ENCODE measurements at regions of chr1 and their contacts with region 1.

Region 1: DNA sequence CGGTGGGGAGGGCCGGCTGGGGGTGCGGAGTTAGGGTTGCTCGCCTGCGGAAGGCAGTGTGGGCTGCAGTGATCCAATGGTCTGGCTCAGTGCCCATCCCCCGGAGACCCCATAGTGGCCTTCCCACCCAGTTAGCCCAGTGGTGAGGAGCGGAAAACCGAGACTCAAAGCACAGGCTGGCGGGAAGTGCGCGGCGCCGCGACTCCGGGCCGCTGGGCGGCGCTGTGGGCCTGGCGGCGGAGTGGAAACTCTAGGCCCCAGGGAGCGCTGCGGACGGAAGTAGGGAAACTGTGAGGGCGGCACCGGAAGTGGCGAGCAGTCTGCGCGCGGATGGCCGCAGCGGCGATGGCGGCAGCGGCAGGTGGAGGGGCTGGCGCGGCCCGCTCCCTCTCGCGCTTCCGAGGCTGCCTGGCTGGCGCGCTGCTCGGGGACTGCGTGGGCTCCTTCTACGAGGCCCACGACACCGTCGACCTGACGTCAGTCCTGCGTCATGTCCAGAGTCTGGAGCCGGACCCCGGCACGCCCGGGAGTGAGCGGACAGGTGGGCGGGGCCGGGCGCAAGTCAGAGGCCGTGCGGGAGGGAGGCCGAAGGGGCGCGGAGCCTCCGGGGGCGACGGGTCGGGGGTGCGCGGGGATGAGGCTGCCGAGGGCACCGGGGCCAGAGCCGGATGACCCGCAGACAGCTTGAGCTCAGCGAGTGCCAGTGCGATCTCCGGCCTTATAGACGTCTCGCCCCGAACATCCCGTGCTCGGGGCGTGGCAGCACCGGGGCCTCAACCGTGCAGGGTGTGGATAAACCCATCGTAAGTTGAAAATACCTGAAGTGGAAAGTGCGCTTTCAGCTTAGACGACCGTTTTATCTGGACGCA is at the start of gene ADPRS:
- DNase-seq: peak; percentile 97
- H3K4me3 Mint-ChIP-seq: peak within 1 kb of the TSS; percentile 95
- H3K27ac Mint-ChIP-seq: peak within 1 kb of the TSS; percentile 89
- H3K4me1 Mint-ChIP-seq: peaks cover 21% of the 10 kb centered on the region
- H3K27me3 Mint-ChIP-seq: peaks cover 5% of the 10 kb centered on the region
- total RNA-seq, gene ADPRS: 35.3 and 38.8 TPM in 2 replicates

Region 2: DNA sequence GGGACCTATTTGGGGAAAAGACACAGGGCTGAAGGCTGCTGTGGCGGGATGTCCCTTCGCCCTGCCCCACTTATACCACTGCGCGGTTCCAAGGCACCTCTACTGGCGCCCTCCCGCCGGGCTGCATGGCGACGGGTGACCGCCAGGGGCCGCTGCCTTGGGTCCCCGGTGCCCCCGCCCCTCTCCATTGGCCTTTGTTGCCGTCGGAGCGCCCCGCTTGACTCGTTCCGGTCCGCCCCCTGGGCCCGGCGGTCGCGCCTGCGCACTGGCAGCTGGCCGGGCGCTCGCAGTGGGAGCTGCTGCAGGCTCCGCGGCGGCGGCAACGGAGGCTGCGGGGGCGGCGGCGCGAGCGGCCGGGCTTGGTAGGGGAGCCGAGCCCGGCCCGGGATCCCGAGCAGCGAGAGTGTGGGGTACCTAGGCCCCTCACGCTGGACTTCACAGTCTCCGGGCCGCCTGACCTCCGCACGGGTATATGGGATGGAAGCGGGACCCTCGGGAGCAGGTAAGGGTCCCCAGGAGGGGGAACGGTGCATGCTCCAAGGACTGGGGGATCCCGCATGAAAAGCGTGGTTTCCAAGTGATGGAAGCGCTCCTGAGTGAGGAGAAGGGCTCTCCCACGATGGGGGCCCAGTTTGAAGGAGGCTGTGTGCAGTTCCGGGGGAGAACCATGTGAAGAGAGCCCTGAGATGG is 205.7 kb before region 1 on chr1 and contains the start of gene AGO1:
- intact Hi-C with region 1: loop called (anchors 5 kb)
- DNase-seq: peak; percentile 100
- H3K4me3 Mint-ChIP-seq: peak within 1 kb of the TSS; percentile 95
- H3K27ac Mint-ChIP-seq: peak within 1 kb of the TSS; percentile 82
- H3K4me1 Mint-ChIP-seq: peaks cover 41% of the 10 kb centered on the region
- H3K27me3 Mint-ChIP-seq: peaks cover 5% of the 10 kb centered on the region
- total RNA-seq, gene AGO1: 38.6 and 39.1 TPM in 2 replicates

Region 3: GRCh38 chr1:36034692-36035091 is 54.1 kb before region 1 on chr1:
- intact Hi-C with region 1: no loop called
- DNase-seq: no peak
- H3K4me3 Mint-ChIP-seq: no peak overlapping the region
- H3K27ac Mint-ChIP-seq: no peak overlapping the region
- H3K4me1 Mint-ChIP-seq: no peaks in the 10 kb centered on the region
- H3K27me3 Mint-ChIP-seq: no peaks in the 10 kb centered on the region

Region 4: DNA sequence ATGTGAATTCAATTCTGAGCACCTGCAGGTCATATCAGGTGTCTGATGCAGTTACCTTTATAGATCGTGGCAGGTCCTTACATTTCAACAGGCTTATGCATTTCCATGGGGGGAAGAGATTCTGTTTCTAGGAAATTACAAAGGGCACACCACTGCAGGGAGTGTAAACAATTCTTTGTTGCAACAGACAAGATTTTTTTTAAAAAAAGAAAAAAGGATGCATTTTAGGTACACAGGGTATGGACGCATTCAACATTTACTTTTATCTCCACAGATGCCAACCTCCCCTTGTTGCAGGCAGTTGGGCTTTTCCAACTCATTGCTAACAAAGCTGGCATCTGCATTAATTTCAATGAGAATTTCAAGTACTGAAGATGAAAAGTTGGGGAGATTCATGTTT is 18.5 kb before region 1 on chr1:
- intact Hi-C with region 1: no loop called
- DNase-seq: no peak
- H3K4me3 Mint-ChIP-seq: no peak overlapping the region
- H3K27ac Mint-ChIP-seq: no peak overlapping the region
- H3K4me1 Mint-ChIP-seq: no peaks in the 10 kb centered on the region
- H3K27me3 Mint-ChIP-seq: no peaks in the 10 kb centered on the region

Measured in activated CD4-positive, alpha-beta T cell treated with anti-CD3 and anti-CD28 coated beads, Interleukin-2, amount 10 ng/mL, durations not matched to agents 24 days and 14 days (primary cell).